Activated naive CD4-positive, alpha-beta T cell treated with anti-CD3 and anti-CD28 coated beads, Interleukin-2, amount 10 ng/mL, durations not matched to agents 7 days and 5 days (primary cell): ENCODE measurements at regions of chr5 and their contacts with region 1.

Region 1: DNA sequence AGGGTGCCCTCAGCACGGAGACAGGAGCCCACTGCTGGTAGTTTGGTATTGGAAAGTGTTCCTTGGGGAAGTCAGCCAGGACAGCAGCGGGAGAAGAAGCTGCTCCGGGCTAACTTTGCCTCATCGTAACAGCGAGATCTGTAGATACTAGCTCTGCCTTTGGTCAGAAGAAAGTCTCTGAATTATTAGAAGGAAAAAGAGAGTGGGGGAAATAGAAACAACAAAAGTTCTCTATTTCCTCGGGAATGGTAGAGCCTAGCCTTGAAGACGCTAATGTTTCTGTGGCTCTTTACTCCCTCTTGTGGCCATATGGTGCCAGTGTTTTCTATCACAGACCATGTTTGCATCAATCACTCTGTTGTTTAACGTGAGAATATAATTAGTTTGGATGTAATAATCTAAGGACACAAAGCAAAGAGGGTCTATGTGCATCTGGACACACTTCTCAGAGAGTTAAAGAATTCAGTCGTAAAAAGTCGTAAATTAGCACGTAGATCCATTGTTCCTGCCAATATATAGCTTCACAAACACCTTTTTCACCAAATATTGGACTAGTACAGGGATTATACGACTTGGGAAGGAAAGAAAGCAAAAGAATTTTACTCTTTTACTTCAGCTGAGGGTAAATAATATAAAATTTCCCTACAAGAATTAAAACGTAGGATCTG is 40.2 kb upstream of the HSD17B4 start:
- DNase-seq: peak; percentile 65
- H3K4me3 Mint-ChIP-seq: peak overlapping the region; percentile 71
- H3K27ac Mint-ChIP-seq: peak overlapping the region; percentile 44
- H3K4me1 Mint-ChIP-seq: peaks cover 29% of the 10 kb centered on the region
- H3K27me3 Mint-ChIP-seq: no peaks in the 10 kb centered on the region

Region 2: GRCh38 chr5:118987988-118988865 is 423.8 kb before region 1 on chr5 and contains the start of gene DTWD2:
- CTCF ChIA-PET with region 1: interaction called, 83 read pairs
- DNase-seq: peak; percentile 93
- H3K4me3 Mint-ChIP-seq: peak within 1 kb of the TSS; percentile 70
- H3K27ac Mint-ChIP-seq: peak within 1 kb of the TSS; percentile 76
- H3K4me1 Mint-ChIP-seq: peaks cover 16% of the 10 kb centered on the region
- H3K27me3 Mint-ChIP-seq: no peaks in the 10 kb centered on the region

Region 3: GRCh38 chr5:119255571-119256356 is 156.3 kb before region 1 on chr5:
- CTCF ChIA-PET with region 1: interaction called, 17 read pairs
- DNase-seq: no peak
- H3K4me3 Mint-ChIP-seq: no peak overlapping the region
- H3K27ac Mint-ChIP-seq: no peak overlapping the region
- H3K4me1 Mint-ChIP-seq: peaks cover 4% of the 10 kb centered on the region
- H3K27me3 Mint-ChIP-seq: no peaks in the 10 kb centered on the region

Region 4: GRCh38 chr5:119328753-119329602 is 83.1 kb before region 1 on chr5:
- CTCF ChIA-PET with region 1: interaction called, 44 read pairs
- DNase-seq: peak; percentile 68
- H3K4me3 Mint-ChIP-seq: peak overlapping the region; percentile 28
- H3K27ac Mint-ChIP-seq: peak overlapping the region; percentile 95
- H3K4me1 Mint-ChIP-seq: peaks cover 85% of the 10 kb centered on the region
- H3K27me3 Mint-ChIP-seq: no peaks in the 10 kb centered on the region

Region 5: GRCh38 chr5:119347991-119348390 is 64.1 kb before region 1 on chr5:
- CTCF ChIA-PET with region 1: interaction called, 25 read pairs
- DNase-seq: no peak
- H3K4me3 Mint-ChIP-seq: no peak overlapping the region
- H3K27ac Mint-ChIP-seq: no peak overlapping the region
- H3K4me1 Mint-ChIP-seq: peaks cover 91% of the 10 kb centered on the region
- H3K27me3 Mint-ChIP-seq: no peaks in the 10 kb centered on the region

Region 6: DNA sequence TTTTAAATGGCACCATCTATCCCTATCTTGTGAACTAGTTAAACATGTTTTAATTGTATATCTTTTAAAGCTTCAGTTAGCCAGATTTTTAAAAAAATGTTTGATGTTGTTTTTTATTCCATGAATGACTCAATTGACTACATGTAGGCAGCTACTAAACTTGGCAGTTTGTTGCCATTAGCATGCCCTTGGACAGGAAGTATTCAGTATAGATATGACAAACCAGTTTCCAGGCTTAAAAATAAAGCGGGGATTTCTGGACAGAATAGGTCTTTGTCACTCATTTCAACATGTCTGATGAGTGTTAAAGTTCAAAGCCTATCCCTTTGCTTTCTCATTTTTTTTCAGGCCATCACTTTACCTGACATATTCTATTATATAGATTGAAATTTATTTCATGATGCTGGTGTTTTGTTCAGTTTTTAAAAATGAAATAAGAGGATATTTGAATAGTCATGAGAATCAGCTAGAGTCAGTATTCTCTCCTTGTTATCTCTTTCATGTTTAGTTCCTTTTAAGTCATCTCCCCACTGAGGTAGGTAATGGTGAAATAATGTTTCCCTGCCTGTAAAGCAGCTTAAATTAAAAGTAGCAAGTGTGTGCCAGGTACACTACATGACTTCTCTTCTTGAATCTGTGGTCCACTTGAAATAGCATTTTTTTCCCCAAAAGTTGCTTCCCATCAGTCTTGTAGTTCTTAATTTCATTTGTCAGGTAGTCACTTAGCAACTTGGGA is 44.4 kb before region 1 on chr5:
- CTCF ChIA-PET with region 1: interaction called, 14 read pairs
- DNase-seq: no peak
- H3K4me3 Mint-ChIP-seq: peak overlapping the region; percentile 43
- H3K27ac Mint-ChIP-seq: peak overlapping the region; percentile 91
- H3K4me1 Mint-ChIP-seq: peaks cover 81% of the 10 kb centered on the region
- H3K27me3 Mint-ChIP-seq: no peaks in the 10 kb centered on the region

Region 7: DNA sequence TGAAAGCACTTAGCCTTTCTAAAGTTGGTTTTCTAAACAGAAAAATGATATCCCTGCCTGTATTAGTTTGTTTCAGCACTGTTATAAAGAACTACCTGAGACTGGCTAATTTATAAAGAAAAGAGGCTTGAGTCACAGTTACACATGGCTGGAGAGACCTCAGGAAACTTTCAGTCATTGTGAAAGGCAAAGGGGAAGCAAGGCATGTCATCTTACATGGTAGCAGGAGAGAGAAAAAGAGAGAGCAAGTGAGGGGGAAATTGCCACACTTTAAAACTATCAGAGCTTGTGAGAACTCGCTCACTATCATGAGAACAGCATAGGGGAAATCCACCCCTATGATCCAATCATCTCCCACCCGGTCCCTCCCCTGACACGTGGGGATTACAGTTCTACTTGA is 282.2 kb after region 1 on chr5:
- CTCF ChIA-PET with region 1: no interaction called
- DNase-seq: no peak
- H3K4me3 Mint-ChIP-seq: no peak overlapping the region
- H3K27ac Mint-ChIP-seq: no peak overlapping the region
- H3K4me1 Mint-ChIP-seq: no peaks in the 10 kb centered on the region
- H3K27me3 Mint-ChIP-seq: no peaks in the 10 kb centered on the region